ENCODE measurements at regions of chr13 and their contacts with region 1.

Region 1: DNA sequence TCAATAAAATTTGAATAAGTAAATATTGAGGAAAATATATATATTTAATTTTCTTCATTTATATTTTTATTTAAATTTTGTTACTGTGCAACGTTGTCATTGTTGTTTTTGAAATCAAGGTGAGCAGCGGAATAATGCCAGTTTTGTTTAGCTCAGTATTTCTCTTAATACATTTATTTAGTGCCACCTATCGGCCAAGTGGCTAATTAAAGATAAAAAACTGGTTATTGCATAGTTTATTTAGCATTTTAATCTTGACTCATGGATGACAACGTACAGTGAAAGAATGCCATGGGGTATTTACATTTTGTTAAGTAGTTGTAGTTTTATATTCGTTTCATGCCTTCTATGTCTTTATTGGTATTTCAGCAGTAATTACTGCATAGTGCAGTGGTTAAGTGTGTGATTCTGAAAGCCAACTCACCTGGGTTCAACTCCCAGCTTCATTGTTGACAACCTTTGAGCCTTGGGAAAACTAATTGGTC is 265.9 kb downstream of the MYO16 start:
- DNase-seq: no peak
- ATAC-seq: peak; percentile 52; the same call in 1 of the 2 replicates
- H3K4me3 ChIP-seq: no peak overlapping the region
- H3K27ac ChIP-seq: no peak overlapping the region
- H3K4me1 ChIP-seq: no peaks in the 10 kb centered on the region
- H3K27me3 ChIP-seq: no peaks in the 10 kb centered on the region
- CTCF ChIP-seq: peak; percentile 24 to 64 (median 47); a peak in 4 of 6 replicates
- POLR2A ChIP-seq: no peak
- RAD21 ChIP-seq: peak; percentile 68

Region 2: DNA sequence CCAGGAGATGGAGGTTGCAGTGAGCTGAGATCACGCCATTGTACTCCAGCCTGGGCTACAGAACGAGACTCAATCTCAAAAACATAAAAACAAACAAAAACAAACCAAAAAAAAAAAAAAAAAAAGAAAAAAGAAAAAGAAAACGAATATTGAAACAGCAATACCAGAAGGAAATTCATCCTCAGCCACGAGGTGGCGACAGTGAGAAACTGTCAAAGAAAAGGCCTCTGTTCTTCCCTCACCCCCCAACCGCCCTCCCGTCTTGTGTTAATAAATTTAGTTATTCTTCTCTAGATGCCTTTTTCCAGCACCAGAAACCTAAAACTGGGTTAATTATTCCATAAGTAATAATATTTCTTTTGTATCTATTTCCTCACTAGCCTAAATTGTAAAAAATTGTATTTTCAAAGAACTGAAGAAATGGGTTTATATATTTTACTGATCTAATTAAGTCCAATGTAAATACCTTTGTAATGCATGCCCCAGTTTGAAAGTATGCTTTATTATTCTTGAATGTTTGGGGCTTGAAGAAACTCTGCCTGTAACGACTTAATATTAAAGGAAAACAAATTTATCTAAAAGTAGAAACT is 718.5 kb before region 1 on chr13:
- CTCF ChIA-PET with region 1: no interaction called
- POLR2A ChIA-PET with region 1: no interaction called
- RAD21 ChIA-PET with region 1: no interaction called
- intact Hi-C with region 1: loop called (anchors 5 kb)
- DNase-seq: peak; percentile 36
- ATAC-seq: peak; percentile 78
- H3K4me3 ChIP-seq: no peak overlapping the region
- H3K27ac ChIP-seq: no peak overlapping the region
- H3K4me1 ChIP-seq: no peaks in the 10 kb centered on the region
- H3K27me3 ChIP-seq: no peaks in the 10 kb centered on the region
- CTCF ChIP-seq: peak; percentile 26 to 68 (median 61); a peak in 5 of 6 replicates
- POLR2A ChIP-seq: no peak
- RAD21 ChIP-seq: peak; percentile 28; the same call in 1 of the 2 replicates

Region 3: GRCh38 chr13:108322206-108322824 is 572.9 kb before region 1 on chr13:
- CTCF ChIA-PET with region 1: interaction called, 4 read pairs
- POLR2A ChIA-PET with region 1: no interaction called
- RAD21 ChIA-PET with region 1: no interaction called
- intact Hi-C with region 1: loop called (anchors 1 kb)
- DNase-seq: peak; percentile 28
- ATAC-seq: peak; percentile 88
- H3K4me3 ChIP-seq: no peak overlapping the region
- H3K27ac ChIP-seq: no peak overlapping the region
- H3K4me1 ChIP-seq: no peaks in the 10 kb centered on the region
- H3K27me3 ChIP-seq: peaks cover 51% of the 10 kb centered on the region
- CTCF ChIP-seq: peak; percentile 53 to 87 (median 65); a peak in 5 of 6 replicates
- POLR2A ChIP-seq: no peak
- RAD21 ChIP-seq: peak; percentile 70

Region 4: GRCh38 chr13:108508263-108508662 is 387.0 kb before region 1 on chr13:
- CTCF ChIA-PET with region 1: interaction called, 4 read pairs
- POLR2A ChIA-PET with region 1: no interaction called
- RAD21 ChIA-PET with region 1: no interaction called
- intact Hi-C with region 1: loop called (anchors 10 kb)
- DNase-seq: peak; percentile 16
- ATAC-seq: peak; percentile 59
- H3K4me3 ChIP-seq: no peak overlapping the region
- H3K27ac ChIP-seq: no peak overlapping the region
- H3K4me1 ChIP-seq: no peaks in the 10 kb centered on the region
- H3K27me3 ChIP-seq: no peaks in the 10 kb centered on the region
- CTCF ChIP-seq: peak; percentile 42 to 59 (median 47); a peak in 5 of 6 replicates
- POLR2A ChIP-seq: no peak
- RAD21 ChIP-seq: peak; percentile 56

Region 5: DNA sequence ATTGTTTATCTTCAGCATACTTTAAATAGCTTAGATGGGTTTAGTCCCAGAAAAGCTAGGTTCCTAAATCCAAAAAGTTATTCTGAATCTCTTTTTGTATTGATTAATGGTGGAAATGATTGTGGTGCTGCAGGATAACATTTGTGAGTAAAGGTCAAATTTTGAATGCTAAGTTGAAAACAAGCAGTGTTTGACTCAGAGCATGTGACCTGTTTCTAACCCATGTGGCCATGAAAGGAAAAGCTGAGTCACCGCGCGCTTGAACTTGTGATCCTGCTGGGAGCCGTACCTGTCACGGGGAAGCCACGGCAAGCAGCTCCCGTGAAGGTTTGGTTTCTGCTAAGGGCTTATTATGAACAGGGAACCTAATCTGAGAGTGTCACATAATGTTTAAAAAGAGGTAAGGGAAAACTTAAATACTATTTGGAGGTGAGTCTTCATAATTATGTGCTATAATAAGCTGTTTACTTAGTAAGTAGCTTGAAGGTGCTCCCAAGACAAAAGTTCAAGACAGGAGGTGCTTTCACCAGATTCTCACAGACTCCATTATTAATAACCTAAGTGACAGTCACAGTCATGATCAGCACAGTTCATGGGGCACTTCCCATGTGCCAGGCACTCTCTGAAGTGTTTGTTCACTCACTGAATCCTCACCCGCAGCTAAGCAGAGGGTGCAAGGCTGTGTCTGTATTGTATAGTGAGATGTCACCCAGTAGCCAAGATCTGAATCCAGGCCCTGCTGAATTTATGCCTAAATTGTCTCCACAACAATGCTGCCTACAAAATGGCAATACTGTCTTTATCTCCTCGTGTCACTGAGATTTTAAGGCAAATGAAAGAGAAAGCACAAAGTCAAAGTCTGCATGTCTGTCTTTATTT is 20.6 kb after region 1 on chr13:
- CTCF ChIA-PET with region 1: interaction called, 15 read pairs
- POLR2A ChIA-PET with region 1: no interaction called
- RAD21 ChIA-PET with region 1: no interaction called
- intact Hi-C with region 1: no loop called
- DNase-seq: peak; percentile 91
- ATAC-seq: peak; percentile 88
- H3K4me3 ChIP-seq: peak overlapping the region in 1 of 2 experiments; percentile 30; a peak in 2 of 4 replicates
- H3K27ac ChIP-seq: peak overlapping the region; percentile 67; the same call in 1 of the 2 replicates
- H3K4me1 ChIP-seq: peaks cover 25 to 41% of the 10 kb centered on the region in 2 experiments
- H3K27me3 ChIP-seq: no peaks in the 10 kb centered on the region
- CTCF ChIP-seq: no peak
- POLR2A ChIP-seq: no peak
- RAD21 ChIP-seq: no peak

Measured in HCT116 (cell line).